Mammary epithelial cell (primary cell): ENCODE measurements at regions of chr15 and their contacts with region 1.

Region 1: DNA sequence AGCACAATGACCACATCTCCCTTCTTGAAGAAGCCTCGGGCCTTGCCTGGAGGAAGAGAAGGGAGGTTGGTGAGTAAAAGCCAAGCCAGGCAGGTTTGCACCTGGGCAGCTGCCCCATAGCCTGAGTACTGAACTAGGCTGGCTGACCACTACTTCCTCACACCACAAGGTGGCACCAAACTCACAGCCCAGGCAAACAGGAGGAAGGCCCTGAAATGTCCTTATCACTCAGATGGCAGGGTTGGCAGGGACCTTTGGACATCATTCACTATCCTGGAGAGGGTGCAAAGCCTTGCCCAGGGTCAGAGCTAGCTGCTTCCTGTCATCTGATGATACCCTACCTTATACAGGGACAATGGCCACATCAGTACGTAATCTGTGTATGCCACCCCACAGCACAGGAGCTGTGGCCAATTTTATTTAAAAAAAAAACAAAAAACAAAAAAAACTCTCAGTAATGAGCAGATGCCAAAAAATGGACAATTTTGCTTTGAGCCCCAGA is 2.2 kb upstream of the GRAMD2A start:
- DNase-seq: peak; percentile 65
- H3K4me3 ChIP-seq: no peak overlapping the region
- H3K27ac ChIP-seq: no peak overlapping the region
- H3K4me1 ChIP-seq: peaks cover 84% of the 10 kb centered on the region
- H3K27me3 ChIP-seq: no peaks in the 10 kb centered on the region
- CTCF ChIP-seq: peak; percentile 96 to 98

Region 2: GRCh38 chr15:72098040-72098439 is 101.7 kb before region 1 on chr15:
- CTCF ChIA-PET with region 1: no interaction called
- dilution Hi-C with region 1: no loop called
- in situ Hi-C with region 1: no loop called
- intact Hi-C with region 1: no loop called
- DNase-seq: no peak
- H3K4me3 ChIP-seq: no peak overlapping the region
- H3K27ac ChIP-seq: no peak overlapping the region
- H3K4me1 ChIP-seq: no peaks in the 10 kb centered on the region
- H3K27me3 ChIP-seq: no peaks in the 10 kb centered on the region
- CTCF ChIP-seq: no peak

Region 3: GRCh38 chr15:72222259-72222832 is 22.6 kb after region 1 on chr15:
- CTCF ChIA-PET with region 1: no interaction called
- dilution Hi-C with region 1: no loop called
- in situ Hi-C with region 1: no loop called
- intact Hi-C with region 1: loop called (anchors 1 kb)
- DNase-seq: peak; percentile 96
- H3K4me3 ChIP-seq: peak overlapping the region; percentile 8 to 39 (median 14)
- H3K27ac ChIP-seq: peak overlapping the region; percentile 69
- H3K4me1 ChIP-seq: peaks cover 62% of the 10 kb centered on the region
- H3K27me3 ChIP-seq: no peaks in the 10 kb centered on the region
- CTCF ChIP-seq: peak in 1 of 2 donors; percentile 31

Region 4: DNA sequence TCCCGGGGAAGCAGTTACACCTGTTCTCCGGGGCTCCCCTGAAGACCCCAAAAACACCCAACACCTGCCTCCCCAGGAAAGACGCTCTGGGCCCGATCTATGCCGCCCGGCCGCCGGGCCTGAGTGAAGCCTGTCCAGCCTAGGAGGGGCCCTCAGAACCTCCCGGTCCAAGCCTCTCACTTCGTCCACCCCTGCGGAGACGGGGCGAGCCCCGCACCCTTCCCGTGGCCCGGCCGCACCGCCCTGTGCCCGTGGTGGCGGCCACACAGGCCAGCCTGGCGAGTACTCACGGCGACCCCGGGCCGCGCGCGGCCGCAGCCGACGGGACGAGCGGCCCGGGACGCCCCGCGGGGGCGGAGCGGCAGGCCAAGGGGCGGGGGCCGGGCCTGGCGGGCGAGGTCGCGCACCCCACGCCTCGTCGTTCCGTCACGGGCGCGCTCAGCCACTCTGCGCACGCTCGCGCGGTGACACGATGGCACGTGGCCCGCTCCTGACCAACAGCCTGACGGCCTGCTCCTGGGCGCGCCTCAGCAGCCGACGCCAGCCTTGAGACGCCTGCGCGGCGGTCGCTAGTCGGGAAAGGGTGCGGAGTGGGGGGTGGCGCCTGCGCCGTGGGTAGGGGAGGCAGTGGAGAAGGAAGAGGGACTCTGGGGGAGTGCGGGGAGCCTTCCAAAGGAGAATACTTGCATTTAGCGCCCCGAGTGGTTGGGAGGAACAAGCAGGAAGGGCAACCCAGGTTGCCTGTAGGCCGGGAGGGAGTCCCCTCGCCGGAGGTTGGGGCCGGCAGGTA is 72.6 kb after region 1 on chr15 and contains the start of gene PARP6:
- CTCF ChIA-PET with region 1: interaction called, 3 read pairs
- dilution Hi-C with region 1: loop called (anchors 5 kb)
- in situ Hi-C with region 1: no loop called
- intact Hi-C with region 1: loop called (anchors 1 kb)
- DNase-seq: peak; percentile 99
- H3K4me3 ChIP-seq: peak within 1 kb of the TSS; percentile 70 to 84 (median 77)
- H3K27ac ChIP-seq: peak within 1 kb of the TSS; percentile 68
- H3K4me1 ChIP-seq: peaks cover 20% of the 10 kb centered on the region
- H3K27me3 ChIP-seq: no peaks in the 10 kb centered on the region
- CTCF ChIP-seq: peak; percentile 51 to 63
- total RNA-seq, gene PARP6: 28.3 to 58.2 TPM

Region 5: DNA sequence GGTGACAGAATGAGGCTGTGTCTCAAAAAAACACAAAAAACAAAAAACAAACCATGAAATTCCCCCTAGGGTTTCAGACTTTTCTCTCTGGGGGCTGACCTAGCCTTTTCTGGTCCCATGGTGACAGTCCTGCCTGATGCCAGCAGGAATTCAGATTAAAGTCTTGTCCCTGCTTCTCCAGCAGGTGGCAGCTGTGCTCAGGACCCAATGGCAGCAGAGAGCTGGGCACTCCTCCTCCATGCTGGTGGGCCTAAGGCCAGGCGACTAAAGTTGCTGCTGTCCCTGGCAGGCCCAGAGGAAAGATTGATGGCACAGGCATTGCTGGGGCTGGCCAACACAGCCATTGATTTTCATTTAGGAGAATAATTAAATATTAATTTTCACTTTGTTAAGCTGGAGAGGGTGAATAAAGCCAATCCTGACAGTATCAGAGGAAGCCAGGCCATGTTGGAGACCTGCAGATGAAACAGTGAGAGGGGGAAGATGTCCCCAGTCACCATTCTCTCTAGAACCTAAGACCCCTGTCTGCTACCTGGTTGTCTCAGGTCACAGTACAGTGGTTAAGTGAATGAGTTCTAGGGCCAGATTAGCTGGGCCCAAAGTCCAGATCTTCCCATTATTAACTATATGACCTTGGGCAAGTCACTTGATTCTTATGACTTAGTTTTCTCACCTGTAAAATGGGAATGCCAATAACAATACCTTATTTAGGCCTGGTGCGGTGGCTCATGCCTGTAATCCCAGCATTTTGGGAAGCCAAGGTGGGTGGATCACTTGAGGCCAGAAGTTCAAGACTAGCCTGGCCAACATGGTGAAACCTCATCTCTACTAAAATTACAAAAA is 113.1 kb after region 1 on chr15:
- CTCF ChIA-PET with region 1: no interaction called
- dilution Hi-C with region 1: no loop called
- in situ Hi-C with region 1: no loop called
- intact Hi-C with region 1: loop called (anchors 1 kb)
- DNase-seq: peak; percentile 36
- H3K4me3 ChIP-seq: no peak overlapping the region
- H3K27ac ChIP-seq: no peak overlapping the region
- H3K4me1 ChIP-seq: no peaks in the 10 kb centered on the region
- H3K27me3 ChIP-seq: no peaks in the 10 kb centered on the region
- CTCF ChIP-seq: peak; percentile 72 to 85

Region 6: DNA sequence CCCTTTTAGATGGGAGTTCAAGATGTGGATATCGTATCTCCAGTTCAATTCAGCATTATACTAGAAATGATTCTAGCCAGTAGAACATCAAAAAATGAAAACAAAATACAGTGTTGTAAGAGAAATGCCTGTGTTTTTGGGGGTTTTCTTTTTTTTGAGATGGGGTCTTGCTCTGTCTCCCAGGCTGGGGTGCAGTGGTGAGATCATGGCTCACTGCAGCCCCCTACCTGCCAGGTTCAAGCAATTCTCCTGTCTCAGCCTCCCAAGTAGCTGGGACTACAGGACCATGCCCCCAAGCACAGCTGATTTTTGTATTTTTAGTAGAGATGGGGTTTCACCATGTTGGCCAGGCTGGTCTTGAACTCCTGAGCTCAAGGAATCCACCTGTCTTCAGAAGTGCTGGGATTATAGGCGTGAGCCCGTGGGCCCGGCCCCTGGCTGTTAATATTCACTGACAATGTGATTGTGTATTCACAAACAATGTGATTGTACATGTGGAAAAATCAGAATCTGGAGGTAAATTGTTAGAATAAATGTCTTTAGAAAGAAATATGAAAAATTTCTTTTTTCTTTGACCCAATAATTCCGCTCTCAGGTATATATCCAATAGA is 333.3 kb after region 1 on chr15:
- CTCF ChIA-PET with region 1: no interaction called
- dilution Hi-C with region 1: no loop called
- in situ Hi-C with region 1: no loop called
- intact Hi-C with region 1: loop called (anchors 2 kb)
- DNase-seq: no peak
- H3K4me3 ChIP-seq: no peak overlapping the region
- H3K27ac ChIP-seq: no peak overlapping the region
- H3K4me1 ChIP-seq: no peaks in the 10 kb centered on the region
- H3K27me3 ChIP-seq: no peaks in the 10 kb centered on the region
- CTCF ChIP-seq: peak in 1 of 2 donors; percentile 49